ENCODE measurements at regions of chr11 and their contacts with region 1.

Region 1: DNA sequence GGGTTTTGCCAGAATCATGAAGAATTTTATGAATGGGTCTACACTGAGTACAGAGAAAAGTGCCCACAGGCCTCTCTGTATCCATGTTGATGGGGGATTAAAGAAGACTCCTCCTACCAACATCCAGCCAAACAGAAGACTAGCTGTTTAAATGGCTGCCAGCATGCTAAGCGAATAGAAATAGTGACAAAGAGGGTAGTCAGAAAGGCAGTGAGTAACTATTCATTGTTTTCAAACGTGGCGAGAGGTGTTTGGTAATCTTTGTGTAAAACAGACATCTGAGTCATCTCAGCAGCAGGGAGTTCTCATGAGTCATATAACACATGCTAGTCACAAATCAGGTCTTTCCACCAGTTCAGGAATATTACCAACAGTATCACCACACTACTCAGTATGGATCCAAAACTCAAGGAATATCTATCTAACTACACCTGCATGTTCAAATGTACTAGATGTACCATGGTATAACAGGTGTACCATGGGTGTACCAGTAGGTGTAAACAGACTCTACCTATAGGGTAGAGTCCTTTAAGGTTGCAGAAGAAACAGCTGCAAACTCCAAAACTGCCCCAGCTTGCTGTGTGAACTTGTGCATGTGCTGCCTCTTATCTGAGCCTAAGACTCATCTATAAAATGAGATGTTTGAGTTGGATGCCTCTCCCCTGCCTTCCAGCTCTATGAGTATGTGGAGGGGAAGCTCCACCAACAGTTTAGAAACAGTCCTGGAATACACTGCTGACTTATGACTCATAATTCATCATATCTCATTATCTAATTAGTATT is 82.0 kb downstream of the SLC1A2 start:
- DNase-seq: peak; percentile 50
- H3K4me3 Mint-ChIP-seq: no peak overlapping the region
- H3K27ac Mint-ChIP-seq: peak overlapping the region; percentile 77
- H3K4me1 Mint-ChIP-seq: no peaks in the 10 kb centered on the region
- H3K27me3 Mint-ChIP-seq: no peaks in the 10 kb centered on the region
- CTCF ChIP-seq: no peak

Region 2: DNA sequence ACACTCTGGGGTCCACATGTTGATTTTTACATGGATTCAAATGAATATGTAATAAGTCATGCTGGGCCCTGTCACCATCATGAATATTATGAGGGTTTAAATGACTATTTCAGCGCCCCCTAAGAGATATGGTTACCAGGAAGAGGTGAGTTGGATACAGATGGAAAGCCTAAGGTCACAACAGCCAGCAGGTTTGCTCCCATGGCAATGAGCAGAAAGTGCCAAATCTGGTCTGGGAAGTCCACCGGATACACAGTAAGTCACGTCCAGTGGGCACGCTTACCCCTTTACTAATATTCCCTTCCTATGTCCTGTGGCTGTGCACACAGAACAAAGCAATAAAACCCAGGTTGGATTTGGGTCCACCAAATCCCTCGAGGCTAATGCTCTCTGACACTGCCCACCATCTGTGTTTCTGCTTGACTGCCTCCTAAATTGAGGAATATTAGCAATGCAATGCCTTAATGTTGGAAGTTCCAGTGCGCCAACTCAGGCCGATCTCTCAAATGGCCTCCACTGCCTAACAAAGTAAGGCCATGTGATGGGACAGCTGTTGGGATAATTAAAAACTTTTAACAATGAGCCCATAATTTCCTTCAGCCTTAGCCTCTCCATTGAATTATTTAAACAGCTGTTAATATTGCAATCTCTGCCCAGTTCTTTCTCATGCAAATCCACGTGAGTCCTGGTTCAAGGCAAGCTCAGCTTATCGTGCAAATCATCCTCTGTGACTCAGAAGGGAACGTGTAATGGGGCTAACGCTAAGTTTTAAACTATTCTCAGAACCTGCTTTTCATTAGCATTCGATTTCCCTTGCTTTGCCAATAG is 15.6 kb before region 1 on chr11:
- CTCF ChIA-PET with region 1: interaction called, 10 read pairs
- intact Hi-C with region 1: no loop called
- DNase-seq: no peak
- H3K4me3 Mint-ChIP-seq: no peak overlapping the region
- H3K27ac Mint-ChIP-seq: peak overlapping the region; percentile 83
- H3K4me1 Mint-ChIP-seq: peaks cover 24% of the 10 kb centered on the region
- H3K27me3 Mint-ChIP-seq: no peaks in the 10 kb centered on the region
- CTCF ChIP-seq: no peak

Region 3: DNA sequence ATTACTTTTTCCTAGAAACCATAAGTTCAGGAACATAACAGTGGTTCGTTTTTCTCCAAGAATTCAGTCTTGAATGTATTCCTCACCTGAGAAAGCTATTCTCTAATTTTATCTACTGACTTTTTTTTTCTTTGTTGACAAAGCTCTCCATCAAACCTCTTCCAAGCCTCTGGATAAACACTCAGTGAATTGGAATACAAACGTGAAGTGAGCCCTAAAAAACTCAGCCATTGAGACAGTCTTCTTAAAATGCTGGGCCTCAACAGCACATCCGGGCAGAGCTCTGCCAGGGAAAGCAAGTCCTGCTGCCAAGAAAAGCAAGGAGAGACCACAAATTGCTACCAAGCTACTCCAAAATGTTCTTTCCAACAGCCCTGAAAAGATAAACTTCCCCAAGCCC is 89.7 kb after region 1 on chr11:
- CTCF ChIA-PET with region 1: no interaction called
- intact Hi-C with region 1: no loop called
- DNase-seq: no peak
- H3K4me3 Mint-ChIP-seq: no peak overlapping the region
- H3K27ac Mint-ChIP-seq: no peak overlapping the region
- H3K4me1 Mint-ChIP-seq: no peaks in the 10 kb centered on the region
- H3K27me3 Mint-ChIP-seq: peaks cover 100% of the 10 kb centered on the region
- CTCF ChIP-seq: no peak

Measured in Calu3 (cell line).